Aorta (tissue), 5 donors: ENCODE measurements at regions of chr1 and their contacts with region 1.

Region 1: GRCh38 chr1:53182111-53182593 is 14.5 kb upstream of the CPT2 start:
- DNase-seq: peak; percentile 86 to 95
- ATAC-seq: peak; percentile 64
- H3K4me3 ChIP-seq: no peak overlapping the region
- H3K27ac ChIP-seq: no peak overlapping the region
- H3K4me1 ChIP-seq: no peaks in the 10 kb centered on the region
- H3K27me3 ChIP-seq: no peaks in the 10 kb centered on the region

Region 2: DNA sequence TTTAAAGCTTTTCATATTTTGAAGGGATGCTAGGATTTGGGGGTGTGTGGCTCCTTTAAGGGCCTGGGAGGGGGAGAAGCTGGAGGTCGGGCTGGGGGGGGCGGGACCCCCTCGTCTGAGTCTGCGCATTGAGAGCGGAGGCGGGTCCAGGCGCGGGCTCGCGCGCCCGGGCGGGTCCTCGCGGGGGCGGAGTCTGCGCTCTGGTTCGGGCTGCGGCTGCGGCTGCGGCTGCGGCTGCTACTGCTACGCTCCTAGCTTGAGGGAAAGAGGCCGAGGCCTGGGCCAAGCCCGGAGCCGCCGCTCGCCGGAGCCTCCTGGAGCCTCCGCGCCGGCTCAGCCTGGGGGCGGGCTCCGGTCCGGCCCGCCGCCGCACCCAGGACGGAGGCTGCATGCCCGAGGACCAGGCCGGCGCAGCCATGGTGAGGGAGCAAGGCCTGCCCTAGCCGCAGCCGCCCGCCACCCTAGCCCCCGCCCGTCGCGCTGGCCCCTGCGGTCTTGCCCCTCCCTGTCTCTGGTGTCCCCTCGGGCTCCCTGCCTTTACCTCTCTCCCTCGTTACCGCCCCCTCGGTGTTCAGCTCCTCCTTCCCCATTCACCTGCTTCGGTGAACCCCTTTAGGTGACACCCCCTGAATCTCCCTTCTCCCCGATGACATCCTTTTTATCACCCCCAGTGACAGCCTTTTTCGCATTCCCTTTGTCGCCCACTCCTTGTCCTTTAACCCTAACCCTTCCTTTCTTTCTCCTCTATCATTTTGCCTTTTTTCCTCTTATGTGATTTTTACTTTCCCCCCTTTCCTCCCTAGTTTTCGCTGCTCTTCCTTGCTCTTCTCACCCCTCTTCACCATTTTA is 455.7 kb before region 1 on chr1 and contains the start of gene ZYG11B:
- intact Hi-C with region 1: loop called in 1 of 2 experiments (anchors 10 kb)
- DNase-seq: peak; percentile 95 to 97
- ATAC-seq: peak; percentile 96
- H3K4me3 ChIP-seq: peak within 1 kb of the TSS; percentile 91 to 96
- H3K27ac ChIP-seq: peak within 1 kb of the TSS in 1 of 2 donors; percentile 59
- H3K4me1 ChIP-seq: peaks cover 1 to 4% of the 10 kb centered on the region in 2 donors
- H3K27me3 ChIP-seq: no peaks in the 10 kb centered on the region
- total RNA-seq, gene ZYG11B: 28.9 to 32.3 TPM

Region 3: DNA sequence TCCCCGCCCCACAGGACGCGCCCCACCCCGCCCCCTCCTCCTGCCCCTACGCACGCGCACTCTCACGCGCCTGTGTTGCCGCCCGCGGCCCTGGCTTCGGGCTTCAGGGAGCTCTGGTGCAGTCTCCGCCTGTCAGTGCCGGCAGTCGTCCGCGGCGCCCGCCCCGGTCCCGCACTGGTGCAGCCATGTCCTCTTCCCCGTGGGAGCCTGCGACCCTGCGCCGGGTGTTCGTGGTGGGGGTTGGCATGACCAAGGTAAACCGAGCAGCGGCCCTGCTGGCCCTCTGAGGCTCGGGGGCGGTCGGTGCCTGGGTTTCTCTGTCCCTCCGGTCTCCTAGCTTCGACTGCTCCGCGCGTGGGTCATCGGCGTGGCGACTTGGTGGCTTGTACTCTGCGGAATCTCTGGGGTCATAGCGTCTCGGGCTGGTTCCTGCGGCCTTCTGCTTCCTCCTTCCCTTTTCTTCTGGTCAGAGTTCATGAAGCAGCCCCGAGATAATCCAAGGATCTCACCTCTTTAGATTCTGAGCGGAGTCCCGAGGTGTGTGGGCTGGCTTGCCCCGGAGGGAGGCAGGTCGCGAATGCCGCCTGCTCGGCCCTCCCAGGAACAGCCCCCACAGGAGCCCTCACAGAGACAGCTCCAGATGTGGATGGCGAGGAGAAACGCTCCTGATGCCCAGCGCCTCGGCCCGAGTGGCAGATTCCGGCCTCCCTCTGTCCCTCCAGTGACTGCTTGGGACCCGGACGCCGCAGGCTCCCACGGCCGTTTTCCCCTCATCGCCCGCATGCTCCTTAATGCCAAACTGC is 254.7 kb before region 1 on chr1 and contains the start of gene SCP2:
- intact Hi-C with region 1: loop called in 1 of 2 experiments (anchors 10 kb)
- DNase-seq: peak; percentile 88 to 96
- ATAC-seq: peak; percentile 94
- H3K4me3 ChIP-seq: peak within 1 kb of the TSS; percentile 55 to 77
- H3K27ac ChIP-seq: peak within 1 kb of the TSS in 1 of 2 donors; percentile 14
- H3K4me1 ChIP-seq: no peaks in the 10 kb centered on the region
- H3K27me3 ChIP-seq: no peaks in the 10 kb centered on the region
- total RNA-seq, gene SCP2: 80.3 to 103 TPM

Region 4: GRCh38 chr1:53001128-53001527 is 181.0 kb before region 1 on chr1:
- intact Hi-C with region 1: no loop called
- DNase-seq: no peak
- ATAC-seq: no peak
- H3K4me3 ChIP-seq: no peak overlapping the region
- H3K27ac ChIP-seq: no peak overlapping the region
- H3K4me1 ChIP-seq: peaks cover 0 to 1% of the 10 kb centered on the region in 2 donors
- H3K27me3 ChIP-seq: no peaks in the 10 kb centered on the region

Region 5: GRCh38 chr1:53014791-53015507 is 167.2 kb before region 1 on chr1:
- intact Hi-C with region 1: loop called in 1 of 2 experiments (anchors 10 kb)
- DNase-seq: peak; percentile 82 to 83
- ATAC-seq: peak; percentile 92
- H3K4me3 ChIP-seq: peak overlapping the region; percentile 89 to 98
- H3K27ac ChIP-seq: no peak overlapping the region
- H3K4me1 ChIP-seq: peaks cover 0 to 2% of the 10 kb centered on the region in 2 donors
- H3K27me3 ChIP-seq: no peaks in the 10 kb centered on the region

Region 6: GRCh38 chr1:53061859-53062707 is 120.1 kb before region 1 on chr1 and contains the start of gene PODN:
- intact Hi-C with region 1: loop called (anchors 5 to 10 kb)
- DNase-seq: peak; percentile 69 to 81
- ATAC-seq: peak; percentile 71
- H3K4me3 ChIP-seq: peak within 1 kb of the TSS; percentile 24 to 64
- H3K27ac ChIP-seq: no peak within 1 kb of the TSS
- H3K4me1 ChIP-seq: no peaks in the 10 kb centered on the region
- H3K27me3 ChIP-seq: no peaks in the 10 kb centered on the region
- total RNA-seq, gene PODN: 54.8 to 152 TPM

Region 7: DNA sequence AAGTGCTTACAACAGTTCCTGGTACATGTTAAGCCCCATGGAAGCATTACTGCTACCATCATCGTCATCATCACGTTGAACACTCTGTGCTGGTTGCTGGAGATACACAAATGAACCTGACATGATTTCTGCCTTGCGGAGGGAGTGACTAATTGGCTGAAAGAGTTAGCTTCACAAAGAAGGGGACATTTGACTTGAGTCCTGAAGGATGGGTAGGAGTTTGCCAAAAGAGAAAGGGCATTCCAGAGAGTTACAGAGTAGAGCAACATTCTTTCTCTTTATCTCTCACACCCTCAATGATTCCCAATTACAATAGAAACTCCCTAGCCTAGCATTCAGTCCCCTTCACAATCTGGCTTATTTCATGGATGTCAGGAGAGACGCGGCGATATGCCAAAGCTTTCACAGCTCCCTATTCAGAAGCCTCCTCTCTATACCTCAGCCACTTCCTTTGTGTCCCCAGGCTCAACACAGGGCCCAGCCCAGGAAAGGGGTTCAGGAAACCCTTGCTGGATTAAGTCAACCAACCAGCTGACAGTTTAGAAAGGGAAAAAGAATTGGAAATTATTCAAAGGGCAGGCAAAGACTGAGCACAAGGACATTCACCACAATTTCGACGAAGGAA is 77.8 kb before region 1 on chr1:
- intact Hi-C with region 1: no loop called
- DNase-seq: no peak
- ATAC-seq: no peak
- H3K4me3 ChIP-seq: no peak overlapping the region
- H3K27ac ChIP-seq: no peak overlapping the region
- H3K4me1 ChIP-seq: no peaks in the 10 kb centered on the region
- H3K27me3 ChIP-seq: no peaks in the 10 kb centered on the region